Common myeloid progenitor, CD34-positive (primary cell): ENCODE measurements at regions of chr11 and their contacts with region 1.

Region 1: DNA sequence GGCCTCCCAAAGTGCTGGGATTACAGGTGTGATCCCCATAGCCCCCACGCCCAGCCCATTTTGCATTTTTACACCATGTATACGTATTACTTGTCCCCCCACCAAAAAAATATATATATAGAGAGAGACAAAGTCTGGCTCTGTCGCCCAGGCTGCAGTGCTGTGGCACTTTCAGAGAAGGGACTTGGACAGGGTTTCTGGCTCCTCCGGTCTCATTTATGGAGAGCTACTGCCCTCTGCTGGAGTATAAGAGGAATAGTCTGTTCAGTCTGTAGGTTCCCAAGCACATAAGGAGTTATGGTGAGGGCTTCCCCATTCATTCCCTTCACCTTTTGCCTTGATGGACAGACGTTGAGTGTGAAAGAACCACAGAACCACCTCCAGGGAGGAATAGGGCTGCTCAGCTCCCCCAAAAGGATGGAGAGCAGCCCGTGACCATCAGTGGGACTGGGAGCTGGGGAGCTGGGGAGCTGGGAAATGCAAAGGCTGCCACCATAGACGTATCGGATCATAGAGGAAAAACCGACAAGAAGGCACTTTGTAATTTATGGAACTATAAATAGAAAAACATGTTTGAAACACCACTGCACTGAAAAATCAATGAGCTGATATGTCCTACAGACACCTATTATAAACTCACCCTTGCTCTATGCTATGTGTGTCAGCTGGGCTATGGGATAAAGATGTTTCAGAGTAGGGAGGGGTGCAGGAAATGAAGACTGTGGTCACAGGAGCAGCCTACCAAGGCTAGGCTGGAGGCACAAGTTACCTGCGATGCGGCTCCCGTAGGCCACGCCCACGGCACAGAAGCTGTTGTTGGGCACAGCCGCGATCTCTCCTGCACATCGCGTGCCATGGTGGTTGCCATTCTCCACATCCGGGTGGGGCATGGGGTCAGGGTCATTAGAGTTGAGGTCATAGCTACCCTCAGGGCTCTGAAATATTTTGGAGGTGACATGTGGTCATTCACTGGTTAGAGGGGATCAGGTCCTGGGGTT is 5.2 kb downstream of the PCSK7 start:
- DNase-seq: peak; percentile 76 to 90 (median 84)
- H3K4me3 ChIP-seq: no peak overlapping the region
- H3K27ac ChIP-seq: no peak overlapping the region
- H3K4me1 ChIP-seq: peaks cover 9 to 16% (median 14%) of the 10 kb centered on the region in 4 experiments
- H3K27me3 ChIP-seq: no peaks in the 10 kb centered on the region

Region 2: GRCh38 chr11:116879800-116880625 is 346.7 kb before region 1 on chr11:
- CTCF ChIA-PET with region 1: interaction called, 11 read pairs
- POLR2A ChIA-PET with region 1: no interaction called
- DNase-seq: peak; percentile 72 to 83 (median 80)
- H3K4me3 ChIP-seq: no peak overlapping the region
- H3K27ac ChIP-seq: no peak overlapping the region
- H3K4me1 ChIP-seq: peaks cover 0 to 19% (median 5%) of the 10 kb centered on the region in 4 experiments
- H3K27me3 ChIP-seq: no peaks in the 10 kb centered on the region

Region 3: DNA sequence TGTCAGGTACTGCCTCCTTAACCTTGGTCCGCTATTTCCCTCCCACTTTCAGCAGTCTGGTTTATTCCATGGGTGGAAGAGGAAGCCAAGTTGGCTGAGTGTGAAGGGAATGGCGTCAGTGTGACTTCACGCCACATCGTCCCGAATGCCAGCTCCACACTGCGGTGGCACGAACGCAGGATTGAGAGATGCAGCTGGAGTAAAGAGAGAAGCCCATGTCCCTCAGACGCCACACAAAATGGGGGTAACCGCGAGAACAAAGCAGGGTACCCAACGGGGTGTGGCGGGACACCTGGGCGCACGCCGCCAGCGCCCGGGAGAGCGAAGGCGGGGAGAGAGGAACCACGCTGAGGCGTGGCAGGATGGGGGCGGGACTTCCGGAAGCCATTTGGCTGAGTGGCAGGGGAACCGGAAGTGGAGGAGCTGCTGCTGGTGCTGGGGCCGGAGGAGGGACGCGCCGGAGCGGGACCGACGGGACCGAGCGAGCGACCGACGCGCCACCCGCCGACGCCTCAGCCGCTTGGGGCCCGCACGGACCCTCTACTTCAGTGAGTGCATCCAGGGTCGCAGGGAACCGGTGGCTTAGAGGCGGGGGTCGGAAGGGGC is 82.7 kb before region 1 on chr11 and contains the start of gene PAFAH1B2:
- CTCF ChIA-PET with region 1: interaction called, 11 read pairs
- POLR2A ChIA-PET with region 1: no interaction called
- DNase-seq: peak; percentile 93 to 96 (median 96)
- H3K4me3 ChIP-seq: peak within 1 kb of the TSS; percentile 65 to 99 (median 96)
- H3K27ac ChIP-seq: peak within 1 kb of the TSS; percentile 88 to 91
- H3K4me1 ChIP-seq: peaks cover 12 to 21% (median 17%) of the 10 kb centered on the region in 4 experiments
- H3K27me3 ChIP-seq: no peaks in the 10 kb centered on the region

Region 4: GRCh38 chr11:117171404-117172061 is 55.2 kb before region 1 on chr11:
- CTCF ChIA-PET with region 1: interaction called, 100 read pairs
- POLR2A ChIA-PET with region 1: no interaction called
- DNase-seq: peak in 2 of 3 donors; percentile 11 to 23
- H3K4me3 ChIP-seq: no peak overlapping the region
- H3K27ac ChIP-seq: peak overlapping the region in 1 of 2 experiments; percentile 39
- H3K4me1 ChIP-seq: peaks cover 0 to 9% (median 5%) of the 10 kb centered on the region in 4 experiments
- H3K27me3 ChIP-seq: no peaks in the 10 kb centered on the region

Region 5: GRCh38 chr11:117199061-117199915 is 27.4 kb before region 1 on chr11 and contains the start of gene TAGLN:
- CTCF ChIA-PET with region 1: interaction called, 14 read pairs
- POLR2A ChIA-PET with region 1: interaction called, 3 read pairs
- DNase-seq: no peak
- H3K4me3 ChIP-seq: peak within 1 kb of the TSS in 2 of 7 experiments; percentile 28 to 33
- H3K27ac ChIP-seq: no peak within 1 kb of the TSS
- H3K4me1 ChIP-seq: peaks cover 0 to 7% (median 2%) of the 10 kb centered on the region in 4 experiments
- H3K27me3 ChIP-seq: no peaks in the 10 kb centered on the region

Region 6: GRCh38 chr11:117210620-117211019 is 16.1 kb before region 1 on chr11:
- CTCF ChIA-PET with region 1: interaction called, 28 read pairs
- POLR2A ChIA-PET with region 1: no interaction called
- DNase-seq: no peak
- H3K4me3 ChIP-seq: no peak overlapping the region
- H3K27ac ChIP-seq: no peak overlapping the region
- H3K4me1 ChIP-seq: no peaks in the 10 kb centered on the region
- H3K27me3 ChIP-seq: no peaks in the 10 kb centered on the region